Transverse colon (tissue), 4 donors: ENCODE measurements at regions of chr10 and their contacts with region 1.

Region 1: GRCh38 chr10:9331583-9332008 is 1277.1 kb downstream of the GATA3 start:
- DNase-seq: no peak
- H3K4me3 ChIP-seq: no peak overlapping the region
- H3K27ac ChIP-seq: no peak overlapping the region
- H3K4me1 ChIP-seq: no peaks in the 10 kb centered on the region
- H3K27me3 ChIP-seq: no peaks in the 10 kb centered on the region
- CTCF ChIP-seq: peak; percentile 67 to 83 (median 82)
- EP300 ChIP-seq: no peak
- POLR2A ChIP-seq: no peak

Region 2: DNA sequence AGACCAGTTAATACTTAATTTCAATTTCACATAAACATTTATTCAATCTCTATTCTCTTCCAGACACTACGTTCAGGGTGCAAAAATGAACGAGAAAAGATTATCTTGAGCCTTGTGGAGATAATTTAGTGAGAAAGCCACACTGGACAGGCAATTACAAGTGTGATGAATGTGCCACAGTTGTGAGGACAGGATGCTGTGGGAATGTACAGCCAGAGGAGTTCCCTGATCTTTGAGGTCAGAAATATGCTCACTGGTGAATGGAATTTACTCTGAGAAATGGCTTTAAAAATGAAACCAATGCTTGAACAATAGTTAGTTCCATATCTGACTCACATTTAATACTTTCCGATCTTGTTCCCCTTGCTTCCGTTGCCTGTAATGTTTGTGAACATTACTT is 412.3 kb before region 1 on chr10:
- in situ Hi-C with region 1: no loop called
- intact Hi-C with region 1: no loop called
- DNase-seq: no peak
- H3K4me3 ChIP-seq: no peak overlapping the region
- H3K27ac ChIP-seq: no peak overlapping the region
- H3K4me1 ChIP-seq: no peaks in the 10 kb centered on the region
- H3K27me3 ChIP-seq: no peaks in the 10 kb centered on the region
- CTCF ChIP-seq: no peak
- EP300 ChIP-seq: no peak
- POLR2A ChIP-seq: no peak

Region 3: GRCh38 chr10:10677479-10677878 is 1345.9 kb after region 1 on chr10:
- in situ Hi-C with region 1: loop called in 3 of 4 experiments (anchors 25 kb)
- intact Hi-C with region 1: no loop called
- DNase-seq: peak; percentile 55
- H3K4me3 ChIP-seq: no peak overlapping the region
- H3K27ac ChIP-seq: no peak overlapping the region
- H3K4me1 ChIP-seq: no peaks in the 10 kb centered on the region
- H3K27me3 ChIP-seq: no peaks in the 10 kb centered on the region
- CTCF ChIP-seq: peak; percentile 32 to 36 (median 35)
- EP300 ChIP-seq: no peak
- POLR2A ChIP-seq: no peak

Region 4: GRCh38 chr10:11036407-11037011 is 1704.9 kb after region 1 on chr10:
- in situ Hi-C with region 1: loop called in 2 of 4 experiments (anchors 25 kb)
- intact Hi-C with region 1: no loop called
- DNase-seq: peak; percentile 67
- H3K4me3 ChIP-seq: no peak overlapping the region
- H3K27ac ChIP-seq: peak overlapping the region in 1 of 4 donors; percentile 22
- H3K4me1 ChIP-seq: peaks cover 0 to 36% (median 13%) of the 10 kb centered on the region in 4 donors
- H3K27me3 ChIP-seq: no peaks in the 10 kb centered on the region
- CTCF ChIP-seq: peak; percentile 51 to 70 (median 66)
- EP300 ChIP-seq: no peak
- POLR2A ChIP-seq: no peak

Region 5: DNA sequence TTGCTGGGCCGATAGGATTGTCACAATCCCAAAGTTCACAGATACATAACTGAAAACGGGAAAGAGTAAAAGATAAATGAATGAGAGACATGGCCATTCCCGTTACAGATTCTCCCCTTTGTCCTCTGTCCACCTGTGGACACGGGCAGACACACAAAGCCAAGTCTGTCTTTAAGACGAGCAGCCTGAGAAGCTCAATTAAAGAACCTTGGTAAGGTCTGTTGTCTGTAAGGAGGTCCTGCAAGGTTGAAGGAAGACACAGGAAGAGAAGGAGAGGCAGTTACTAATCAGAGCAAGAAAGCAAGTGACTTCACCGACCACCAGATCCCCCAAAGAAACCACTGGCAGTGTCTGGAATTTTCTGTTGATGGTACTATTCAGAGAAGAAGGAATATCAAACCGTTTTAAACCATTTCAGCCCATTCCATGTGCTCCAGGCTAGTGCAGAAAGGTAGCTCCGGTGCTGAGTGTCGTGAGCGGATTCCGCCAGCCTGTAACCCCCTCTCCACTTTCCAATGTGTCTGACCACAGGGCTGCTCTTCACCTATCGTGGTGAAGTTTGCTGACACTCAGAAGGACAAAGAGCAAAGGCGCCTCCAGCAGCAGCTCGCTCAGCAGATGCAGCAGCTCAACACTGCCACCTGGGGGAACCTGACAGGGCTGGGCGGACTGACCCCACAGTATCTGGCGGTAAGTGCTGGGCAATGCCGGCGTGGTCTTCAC is 1938.7 kb after region 1 on chr10:
- in situ Hi-C with region 1: loop called in 1 of 4 experiments (anchors 25 kb)
- intact Hi-C with region 1: no loop called
- DNase-seq: peak; percentile 75
- H3K4me3 ChIP-seq: no peak overlapping the region
- H3K27ac ChIP-seq: no peak overlapping the region
- H3K4me1 ChIP-seq: peaks cover 0 to 8% (median 0%) of the 10 kb centered on the region in 4 donors
- H3K27me3 ChIP-seq: no peaks in the 10 kb centered on the region
- CTCF ChIP-seq: peak; percentile 69 to 81 (median 75)
- EP300 ChIP-seq: no peak
- POLR2A ChIP-seq: no peak